Sigmoid colon (tissue), 7 donors: ENCODE measurements at regions of chr1 and their contacts with region 1.

Region 1: DNA sequence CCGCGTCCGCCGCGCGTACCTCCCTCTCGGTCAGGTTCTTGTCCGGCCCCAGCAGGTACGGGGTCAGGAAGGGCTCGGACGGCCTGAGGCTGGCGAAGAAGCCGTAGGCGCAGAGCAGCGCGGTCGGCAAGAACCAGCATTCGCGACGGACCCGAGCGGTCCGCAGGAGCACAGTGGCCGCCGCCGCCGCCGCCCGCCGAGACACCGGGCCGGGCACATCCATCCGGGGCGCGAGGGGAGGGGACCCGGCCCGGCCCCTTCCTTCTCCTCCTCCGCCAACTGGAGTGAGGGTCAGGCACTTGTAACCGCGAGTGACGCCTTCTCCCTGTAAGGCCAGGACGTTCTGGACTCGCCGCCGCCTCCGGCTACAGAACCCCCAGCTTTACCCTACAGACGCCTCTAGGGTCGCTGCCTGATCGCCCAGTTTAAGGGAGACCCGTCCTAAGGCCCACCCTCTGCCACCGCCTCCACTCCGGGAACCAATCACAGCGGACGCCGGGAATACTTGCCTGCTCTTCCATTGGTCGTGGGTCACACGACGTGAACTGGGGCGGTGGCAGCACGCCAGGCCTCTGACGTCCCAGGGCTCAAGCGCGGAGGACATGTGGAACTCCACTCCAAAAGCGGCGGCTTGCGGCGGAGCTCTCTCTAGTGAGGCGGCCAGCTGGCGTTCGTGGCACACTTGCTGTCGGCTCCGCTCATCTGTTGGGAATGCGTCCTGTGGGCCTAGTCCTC is at the start of gene SLC19A2:
- DNase-seq: peak; percentile 100
- H3K4me3 ChIP-seq: peak within 1 kb of the TSS; percentile 78 to 92 (median 84)
- H3K27ac ChIP-seq: peak within 1 kb of the TSS; percentile 97 to 100 (median 99)
- H3K4me1 ChIP-seq: peaks cover 7 to 46% (median 38%) of the 10 kb centered on the region in 4 donors
- H3K27me3 ChIP-seq: no peaks in the 10 kb centered on the region
- CTCF ChIP-seq: peak in 1 of 4 experiments; percentile 17
- EP300 ChIP-seq: peak; percentile 96 to 100 (median 97)
- POLR2A ChIP-seq: peak; percentile 88 to 90
- total RNA-seq, gene SLC19A2: 21.0 to 31.3 (median 27.2) TPM

Region 2: GRCh38 chr1:169102567-169102966 is 383.1 kb before region 1 on chr1:
- intact Hi-C with region 1: no loop called
- DNase-seq: no peak
- H3K4me3 ChIP-seq: no peak overlapping the region
- H3K27ac ChIP-seq: peak overlapping the region; percentile 59 to 97 (median 82)
- H3K4me1 ChIP-seq: peaks cover 0 to 30% (median 24%) of the 10 kb centered on the region in 4 donors
- H3K27me3 ChIP-seq: no peaks in the 10 kb centered on the region
- CTCF ChIP-seq: no peak
- EP300 ChIP-seq: no peak
- POLR2A ChIP-seq: no peak

Region 3: DNA sequence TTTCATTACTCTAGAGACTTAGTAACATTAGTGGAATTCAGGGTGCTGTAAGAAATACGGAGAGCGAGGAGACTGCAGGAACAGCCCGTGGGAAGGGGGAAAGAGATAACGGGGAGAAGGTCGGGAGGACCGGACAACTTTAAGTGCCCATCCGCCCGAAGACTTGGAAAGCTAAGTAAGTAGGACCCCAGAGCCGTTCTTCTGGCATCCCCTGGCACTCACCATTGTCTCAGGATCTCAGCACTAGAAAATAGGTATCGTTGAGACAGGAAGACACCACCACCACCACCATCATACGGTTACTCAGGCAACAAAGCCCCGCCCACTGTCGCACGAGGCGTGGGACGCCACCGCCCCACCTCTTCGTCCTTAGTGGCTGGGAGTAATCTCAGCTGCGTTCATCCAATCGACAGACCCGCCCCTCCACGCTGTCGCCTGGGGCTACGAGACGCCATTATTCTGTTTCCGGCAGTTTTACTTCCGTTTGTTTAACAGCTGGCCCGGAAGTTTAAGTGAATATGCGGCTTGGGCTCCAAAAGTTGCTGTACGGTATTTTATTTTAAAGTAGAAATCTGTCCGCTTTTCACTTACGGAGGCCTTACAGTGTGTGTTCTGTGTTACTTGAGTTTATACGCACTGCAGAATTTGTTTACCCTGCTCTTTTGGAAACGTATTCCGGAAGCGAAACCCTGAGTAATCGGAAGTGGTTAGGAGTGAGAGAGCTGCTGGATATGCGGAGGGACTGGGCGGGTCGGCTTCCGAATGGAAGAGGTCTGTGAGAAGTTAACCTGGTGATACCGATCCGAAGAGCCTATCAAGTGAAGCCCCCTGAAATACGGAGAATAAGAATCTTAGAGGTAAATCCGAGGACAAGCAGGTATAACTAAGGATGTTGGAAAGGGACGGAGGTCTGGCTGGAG is 118.0 kb before region 1 on chr1 and contains the starts of genes BLZF1 and NME7:
- intact Hi-C with region 1: loop called (anchors 5 kb)
- DNase-seq: peak; percentile 98
- H3K4me3 ChIP-seq: peak within 1 kb of the TSS; percentile 59 to 72 (median 66)
- H3K27ac ChIP-seq: peak within 1 kb of the TSS; percentile 78 to 83 (median 82)
- H3K4me1 ChIP-seq: peaks cover 2 to 33% (median 26%) of the 10 kb centered on the region in 4 donors
- H3K27me3 ChIP-seq: no peaks in the 10 kb centered on the region
- CTCF ChIP-seq: no peak
- EP300 ChIP-seq: peak in 1 of 4 donors; percentile 32
- POLR2A ChIP-seq: peak in 1 of 2 donors; percentile 43
- total RNA-seq, gene BLZF1: 31.0 to 49.5 (median 38.7) TPM
- total RNA-seq, gene NME7: 20.1 to 39.9 (median 32.1) TPM

Region 4: DNA sequence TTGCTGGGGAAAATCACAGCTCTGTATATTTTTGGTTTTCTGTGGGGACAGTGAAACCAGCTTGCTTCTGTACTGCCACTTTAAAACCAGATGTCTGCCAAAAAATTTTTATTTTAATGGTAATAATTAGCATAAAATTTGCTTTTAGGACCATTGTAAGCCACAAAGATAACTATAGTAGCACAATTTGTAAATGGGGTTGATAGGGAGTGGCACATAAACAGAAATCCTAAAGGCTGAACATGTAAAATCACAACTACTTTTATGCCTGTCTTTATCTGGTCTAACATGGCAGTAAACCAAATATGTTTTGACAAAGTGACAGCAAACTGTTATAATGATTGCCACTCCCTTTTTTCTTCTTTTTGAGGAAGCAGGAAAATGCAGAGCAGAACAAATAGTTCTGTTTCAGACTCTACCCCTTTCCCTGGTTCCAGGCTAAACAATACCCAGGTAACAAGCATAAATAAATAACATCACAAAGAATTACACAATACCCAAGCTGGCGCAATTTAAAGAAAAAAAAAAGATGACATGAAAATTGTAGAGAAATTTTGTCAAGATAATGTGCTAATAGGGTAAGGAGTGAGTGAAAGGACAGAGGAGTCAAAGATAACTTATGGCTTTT is 34.4 kb before region 1 on chr1:
- intact Hi-C with region 1: no loop called
- DNase-seq: no peak
- H3K4me3 ChIP-seq: no peak overlapping the region
- H3K27ac ChIP-seq: no peak overlapping the region
- H3K4me1 ChIP-seq: no peaks in the 10 kb centered on the region
- H3K27me3 ChIP-seq: no peaks in the 10 kb centered on the region
- CTCF ChIP-seq: no peak
- EP300 ChIP-seq: no peak
- POLR2A ChIP-seq: no peak

Region 5: GRCh38 chr1:169511316-169512028 is 25.8 kb after region 1 on chr1:
- intact Hi-C with region 1: loop called (anchors 2 kb)
- DNase-seq: peak; percentile 80
- H3K4me3 ChIP-seq: no peak overlapping the region
- H3K27ac ChIP-seq: peak overlapping the region; percentile 54 to 68 (median 65)
- H3K4me1 ChIP-seq: peaks cover 0 to 20% (median 12%) of the 10 kb centered on the region in 4 donors
- H3K27me3 ChIP-seq: no peaks in the 10 kb centered on the region
- CTCF ChIP-seq: no peak
- EP300 ChIP-seq: peak in 1 of 4 donors; percentile 23
- POLR2A ChIP-seq: no peak

Region 6: DNA sequence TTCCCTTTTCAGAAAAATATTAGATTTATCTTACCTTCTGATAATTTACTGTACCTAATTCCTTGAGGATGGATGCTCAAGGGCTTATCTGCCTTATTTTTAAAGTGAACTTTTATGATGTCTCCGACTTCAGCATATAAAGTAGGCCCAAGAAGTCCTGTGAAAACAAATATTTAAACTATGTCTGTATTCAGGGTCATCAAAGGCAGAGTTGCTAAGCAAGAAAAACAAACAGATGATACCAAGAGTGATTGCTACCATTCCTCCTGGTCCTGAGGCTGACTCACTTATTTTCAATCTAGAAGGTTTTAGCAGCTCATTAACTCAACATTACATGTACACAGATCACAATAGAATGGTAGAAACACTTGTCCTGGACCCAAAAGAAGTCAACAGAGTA is 86.5 kb after region 1 on chr1:
- intact Hi-C with region 1: no loop called
- DNase-seq: no peak
- H3K4me3 ChIP-seq: no peak overlapping the region
- H3K27ac ChIP-seq: peak overlapping the region in 1 of 4 donors; percentile 32
- H3K4me1 ChIP-seq: peaks cover 0 to 16% (median 3%) of the 10 kb centered on the region in 4 donors
- H3K27me3 ChIP-seq: no peaks in the 10 kb centered on the region
- CTCF ChIP-seq: no peak
- EP300 ChIP-seq: no peak
- POLR2A ChIP-seq: no peak

Region 7: GRCh38 chr1:169711469-169712281 is 226.0 kb after region 1 on chr1 and contains the start of gene SELL:
- intact Hi-C with region 1: no loop called
- DNase-seq: peak; percentile 65
- H3K4me3 ChIP-seq: peak within 1 kb of the TSS in 2 of 4 donors; percentile 13 to 31
- H3K27ac ChIP-seq: no peak within 1 kb of the TSS
- H3K4me1 ChIP-seq: peaks cover 0 to 6% (median 0%) of the 10 kb centered on the region in 4 donors
- H3K27me3 ChIP-seq: no peaks in the 10 kb centered on the region
- CTCF ChIP-seq: peak; percentile 18 to 61 (median 58)
- EP300 ChIP-seq: no peak
- POLR2A ChIP-seq: no peak
- total RNA-seq, gene SELL: 0.55 to 1.5 (median 0.77) TPM

Region 8: GRCh38 chr1:169794530-169795416 is 309.1 kb after region 1 on chr1 and contains the start of gene METTL18:
- intact Hi-C with region 1: loop called (anchors 5 kb)
- DNase-seq: peak; percentile 94
- H3K4me3 ChIP-seq: peak within 1 kb of the TSS; percentile 61 to 72 (median 67)
- H3K27ac ChIP-seq: peak within 1 kb of the TSS; percentile 83 to 87 (median 86)
- H3K4me1 ChIP-seq: peaks cover 0 to 17% (median 11%) of the 10 kb centered on the region in 4 donors
- H3K27me3 ChIP-seq: no peaks in the 10 kb centered on the region
- CTCF ChIP-seq: no peak
- EP300 ChIP-seq: peak in 1 of 4 donors; percentile 13
- POLR2A ChIP-seq: no peak
- total RNA-seq, gene METTL18: 4.9 to 14.5 (median 8.9) TPM

Region 9: GRCh38 chr1:169893494-169894362 is 408.0 kb after region 1 on chr1 and contains the start of gene SCYL3:
- intact Hi-C with region 1: loop called (anchors 5 kb)
- DNase-seq: peak; percentile 98
- H3K4me3 ChIP-seq: peak within 1 kb of the TSS; percentile 83 to 96 (median 86)
- H3K27ac ChIP-seq: peak within 1 kb of the TSS; percentile 94 to 99 (median 97)
- H3K4me1 ChIP-seq: peaks cover 0 to 22% (median 17%) of the 10 kb centered on the region in 4 donors
- H3K27me3 ChIP-seq: no peaks in the 10 kb centered on the region
- CTCF ChIP-seq: no peak
- EP300 ChIP-seq: peak in 2 of 4 donors; percentile 25 to 44
- POLR2A ChIP-seq: peak; percentile 7 to 17
- total RNA-seq, gene SCYL3: 9.6 to 13.3 (median 12.8) TPM